ENCODE measurements at regions of chrX and their contacts with region 1.

Region 1: GRCh38 chrX:40175511-40176350 is 78.0 kb upstream of the BCOR start:
- DNase-seq: peak; percentile 72
- H3K4me3 Mint-ChIP-seq: peak overlapping the region; percentile 91
- H3K27ac Mint-ChIP-seq: peak overlapping the region; percentile 99
- H3K4me1 Mint-ChIP-seq: peaks cover 23% of the 10 kb centered on the region
- H3K27me3 Mint-ChIP-seq: no peaks in the 10 kb centered on the region

Region 2: DNA sequence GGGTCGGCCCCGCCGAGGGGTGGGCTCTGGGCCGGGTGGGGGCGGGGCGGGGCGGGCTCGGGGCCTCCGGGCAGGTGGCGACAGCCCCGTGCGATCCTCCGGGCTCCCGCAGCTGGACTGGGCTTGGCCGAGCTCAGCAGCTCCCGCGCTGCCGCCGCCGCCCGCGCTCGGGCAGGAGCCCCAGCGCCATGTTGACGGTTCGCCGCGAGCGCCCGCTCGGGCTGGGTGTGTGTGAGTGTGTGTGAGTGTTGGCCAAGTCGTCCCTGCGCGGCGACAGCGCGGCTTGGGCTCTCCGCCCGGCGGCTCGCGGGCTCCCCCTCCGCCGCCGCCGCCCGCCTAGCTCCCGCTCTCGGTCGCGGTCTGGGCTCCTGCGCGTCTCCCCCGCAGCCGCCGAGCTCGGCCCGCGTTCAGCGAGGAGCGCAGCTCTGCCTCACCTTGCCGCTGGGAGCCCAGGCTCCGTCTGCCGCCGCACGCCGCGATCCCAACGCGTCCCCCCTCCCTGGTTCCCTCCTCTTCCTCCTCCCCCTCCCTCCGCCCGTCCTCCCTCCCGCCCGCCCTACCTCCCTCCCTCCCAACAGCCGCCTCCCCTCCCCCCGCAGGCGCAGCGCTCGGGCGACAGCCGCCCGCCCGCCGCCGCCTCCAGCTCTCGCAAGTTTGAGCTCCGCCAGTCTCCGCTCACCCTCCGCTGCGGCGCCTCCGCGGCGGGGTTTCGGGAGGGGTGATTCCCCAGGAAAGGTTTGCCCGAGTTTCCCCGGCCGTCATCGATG is 78.1 kb before region 1 on chrX and contains the start of gene BCOR:
- CTCF ChIA-PET with region 1: no interaction called
- intact Hi-C with region 1: loop called (anchors 2 kb)
- DNase-seq: peak; percentile 75
- H3K4me3 Mint-ChIP-seq: peak within 1 kb of the TSS; percentile 86
- H3K27ac Mint-ChIP-seq: peak within 1 kb of the TSS; percentile 82
- H3K4me1 Mint-ChIP-seq: peaks cover 24% of the 10 kb centered on the region
- H3K27me3 Mint-ChIP-seq: no peaks in the 10 kb centered on the region
- total RNA-seq, gene BCOR: 29.1 to 29.9 TPM

Region 3: GRCh38 chrX:40207626-40208025 is 31.9 kb after region 1 on chrX:
- CTCF ChIA-PET with region 1: no interaction called
- intact Hi-C with region 1: loop called (anchors 2 kb)
- DNase-seq: peak; percentile 58
- H3K4me3 Mint-ChIP-seq: no peak overlapping the region
- H3K27ac Mint-ChIP-seq: no peak overlapping the region
- H3K4me1 Mint-ChIP-seq: peaks cover 8% of the 10 kb centered on the region
- H3K27me3 Mint-ChIP-seq: no peaks in the 10 kb centered on the region

Region 4: GRCh38 chrX:40266490-40267333 is 91.0 kb after region 1 on chrX:
- CTCF ChIA-PET with region 1: no interaction called
- intact Hi-C with region 1: loop called (anchors 1 kb)
- DNase-seq: peak; percentile 69
- H3K4me3 Mint-ChIP-seq: peak overlapping the region; percentile 70
- H3K27ac Mint-ChIP-seq: no peak overlapping the region
- H3K4me1 Mint-ChIP-seq: peaks cover 8% of the 10 kb centered on the region
- H3K27me3 Mint-ChIP-seq: no peaks in the 10 kb centered on the region

Region 5: GRCh38 chrX:40591126-40591525 is 415.4 kb after region 1 on chrX:
- CTCF ChIA-PET with region 1: no interaction called
- intact Hi-C with region 1: loop called (anchors 1 kb)
- DNase-seq: no peak
- H3K4me3 Mint-ChIP-seq: no peak overlapping the region
- H3K27ac Mint-ChIP-seq: no peak overlapping the region
- H3K4me1 Mint-ChIP-seq: peaks cover 39% of the 10 kb centered on the region
- H3K27me3 Mint-ChIP-seq: no peaks in the 10 kb centered on the region